OCI-LY7 (cell line): ENCODE measurements at regions of chr7 and their contacts with region 1.

Region 1: DNA sequence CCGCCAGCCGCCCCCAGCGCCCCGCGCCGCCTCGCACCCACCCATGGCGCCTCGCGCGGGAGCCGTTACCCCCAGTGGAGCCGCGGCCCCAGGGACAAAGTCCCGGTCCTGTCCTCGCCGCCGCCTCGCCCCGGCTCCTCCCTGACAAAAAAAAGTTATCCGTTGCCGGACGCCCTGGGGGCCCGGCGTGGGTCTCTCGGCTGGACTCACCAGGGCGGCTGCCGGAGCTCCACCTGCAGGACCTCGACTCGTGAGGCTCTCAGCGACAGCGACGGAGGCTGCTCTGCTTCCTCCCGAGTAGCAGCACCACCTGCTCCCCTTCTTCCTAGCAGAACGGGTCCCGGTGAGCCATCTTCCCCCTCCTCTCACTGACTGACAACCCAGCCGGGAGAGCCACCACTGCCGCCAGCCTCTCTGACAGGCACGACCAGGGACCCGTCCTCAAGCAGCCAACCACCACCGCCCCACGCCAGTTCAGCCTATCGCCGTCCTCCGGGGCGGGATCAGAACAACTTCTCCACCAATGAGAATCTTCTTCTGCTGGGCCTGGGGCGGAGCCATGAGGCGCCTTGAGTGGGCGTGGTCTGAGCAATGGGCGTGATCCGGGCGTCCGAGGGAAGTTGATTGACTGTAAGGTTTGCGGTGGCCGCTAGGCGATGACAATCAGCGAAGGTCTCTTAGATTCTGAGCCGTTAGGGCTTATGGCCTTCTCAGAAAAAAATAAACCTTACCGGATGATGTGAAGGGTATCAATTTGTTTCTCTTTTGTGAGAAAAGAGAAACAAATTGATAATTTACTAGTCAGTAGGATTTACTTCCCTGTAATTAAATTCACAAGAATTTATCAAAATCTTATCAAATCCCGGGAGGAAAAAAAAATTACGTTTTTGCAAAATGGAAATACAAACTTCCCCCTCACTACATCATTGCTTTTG is at the start of gene HYCC1:
- DNase-seq: peak; percentile 99
- H3K4me3 ChIP-seq: peak within 1 kb of the TSS; percentile 98
- H3K27ac ChIP-seq: peak within 1 kb of the TSS; percentile 84
- H3K4me1 ChIP-seq: peaks cover 75% of the 10 kb centered on the region
- CTCF ChIP-seq: peak; percentile 79
- total RNA-seq, gene HYCC1: 43.3 and 69.9 TPM in 2 replicates

Region 2: DNA sequence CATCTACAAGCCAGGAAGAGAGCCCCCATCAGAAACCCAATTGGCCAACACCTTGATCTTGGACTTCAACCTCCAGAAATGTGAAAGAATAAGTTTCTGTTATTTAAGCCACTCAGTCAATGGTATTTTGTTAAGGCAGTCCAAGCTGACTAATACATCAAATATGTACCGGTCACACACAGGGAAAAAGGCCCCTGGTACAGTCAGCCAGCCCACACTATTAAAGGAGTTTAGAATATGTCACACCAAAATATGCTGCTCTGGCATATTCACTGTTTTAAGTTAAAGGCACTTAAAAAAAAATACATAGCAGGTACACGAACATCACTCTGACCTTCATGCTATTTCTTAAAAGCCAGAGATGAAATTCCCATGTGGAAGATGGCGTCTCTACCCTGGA is 1053.1 kb before region 1 on chr7:
- CTCF ChIA-PET with region 1: no interaction called
- POLR2A ChIA-PET with region 1: no interaction called
- intact Hi-C with region 1: loop called (anchors 5 kb)
- DNase-seq: no peak
- H3K4me3 ChIP-seq: no peak overlapping the region
- H3K27ac ChIP-seq: no peak overlapping the region
- H3K4me1 ChIP-seq: peaks cover 43% of the 10 kb centered on the region
- CTCF ChIP-seq: no peak

Region 3: DNA sequence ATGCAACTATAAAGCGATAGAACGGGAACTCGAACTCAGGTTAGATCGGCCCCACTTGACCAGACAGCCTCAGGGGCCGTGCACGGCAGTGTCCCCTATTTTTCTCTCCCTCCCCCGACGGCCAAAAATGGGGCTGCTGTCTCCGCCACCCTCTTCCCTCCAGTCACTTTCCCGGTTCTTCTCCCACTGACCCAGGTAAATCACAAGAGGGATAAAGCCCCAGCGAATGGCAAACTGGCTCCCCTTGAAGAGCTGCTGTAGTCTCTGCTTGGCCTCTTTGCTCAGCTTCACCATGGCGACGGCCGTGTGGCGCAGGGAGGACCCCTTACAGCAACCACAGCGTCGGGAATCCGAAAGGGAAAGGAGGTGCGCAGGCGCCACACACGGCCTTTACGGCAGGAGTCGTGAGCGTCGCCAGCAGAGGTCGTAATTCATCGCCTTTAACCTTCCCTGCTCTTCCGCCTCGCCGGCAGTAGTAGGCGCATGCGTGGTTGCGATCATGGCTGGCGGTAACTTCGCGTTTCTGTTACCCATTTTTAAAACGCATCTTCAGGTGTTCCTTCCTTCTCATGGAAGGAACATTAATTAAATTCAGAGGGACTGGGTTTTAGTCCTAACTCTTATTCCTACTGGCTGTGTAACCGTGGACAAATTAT is 191.4 kb before region 1 on chr7 and contains the start of gene TOMM7:
- CTCF ChIA-PET with region 1: interaction called, 3 read pairs
- POLR2A ChIA-PET with region 1: interaction called, 5 read pairs
- intact Hi-C with region 1: loop called (anchors 2 kb)
- DNase-seq: peak; percentile 98
- H3K4me3 ChIP-seq: peak within 1 kb of the TSS; percentile 77
- H3K27ac ChIP-seq: peak within 1 kb of the TSS; percentile 39
- H3K4me1 ChIP-seq: peaks cover 29% of the 10 kb centered on the region
- CTCF ChIP-seq: peak; percentile 51
- total RNA-seq, gene TOMM7: 184 and 195 TPM in 2 replicates

Region 4: GRCh38 chr7:22854158-22855048 is 159.6 kb before region 1 on chr7:
- CTCF ChIA-PET with region 1: no interaction called
- POLR2A ChIA-PET with region 1: interaction called, 5 read pairs
- intact Hi-C with region 1: loop called (anchors 1 kb)
- DNase-seq: peak; percentile 89
- H3K4me3 ChIP-seq: peak overlapping the region; percentile 81
- H3K27ac ChIP-seq: peak overlapping the region; percentile 62
- H3K4me1 ChIP-seq: peaks cover 42% of the 10 kb centered on the region
- CTCF ChIP-seq: peak; percentile 58; the same call in 1 of the 2 replicates

Region 5: DNA sequence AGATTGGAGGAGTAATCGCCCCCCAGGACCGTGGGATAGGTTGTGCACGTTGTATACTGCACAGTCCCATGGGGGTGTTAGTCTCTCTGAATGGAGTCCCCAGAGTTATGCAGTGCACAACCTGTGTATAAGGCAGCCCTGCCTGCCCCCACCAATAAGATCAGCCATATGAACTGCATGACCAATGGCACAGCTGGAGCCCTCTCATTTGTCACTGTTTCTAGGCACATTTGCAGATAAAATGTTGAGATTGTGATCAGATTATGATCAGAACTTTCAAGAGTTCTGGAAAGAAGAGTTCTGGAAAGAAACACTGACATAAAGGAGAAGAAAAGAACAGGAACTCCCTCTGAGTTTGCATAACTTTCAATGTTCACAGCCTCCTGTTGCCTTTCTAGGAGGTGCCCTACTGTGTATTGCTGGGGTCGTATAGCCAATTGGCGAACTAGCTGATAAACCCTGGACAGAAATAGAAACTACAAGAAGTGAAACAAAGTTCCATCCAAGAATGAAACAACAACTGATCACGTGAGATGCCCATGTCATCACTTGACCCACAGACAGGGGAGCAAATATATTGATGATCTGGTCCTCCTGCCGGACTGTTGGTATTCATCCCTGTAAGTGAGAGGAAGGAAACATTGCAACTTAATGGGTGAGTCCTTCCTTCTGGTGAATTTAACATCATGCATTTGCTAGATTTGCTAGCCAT is 141.7 kb before region 1 on chr7:
- CTCF ChIA-PET with region 1: no interaction called
- POLR2A ChIA-PET with region 1: no interaction called
- intact Hi-C with region 1: no loop called
- DNase-seq: no peak
- H3K4me3 ChIP-seq: no peak overlapping the region
- H3K27ac ChIP-seq: no peak overlapping the region
- H3K4me1 ChIP-seq: peaks cover 14% of the 10 kb centered on the region
- CTCF ChIP-seq: no peak

Region 6: GRCh38 chr7:22958742-22959141 is 55.2 kb before region 1 on chr7:
- CTCF ChIA-PET with region 1: no interaction called
- POLR2A ChIA-PET with region 1: interaction called, 4 read pairs
- intact Hi-C with region 1: loop called (anchors 5 kb)
- DNase-seq: no peak
- H3K4me3 ChIP-seq: no peak overlapping the region
- H3K27ac ChIP-seq: no peak overlapping the region
- H3K4me1 ChIP-seq: no peaks in the 10 kb centered on the region
- CTCF ChIP-seq: no peak

Region 7: DNA sequence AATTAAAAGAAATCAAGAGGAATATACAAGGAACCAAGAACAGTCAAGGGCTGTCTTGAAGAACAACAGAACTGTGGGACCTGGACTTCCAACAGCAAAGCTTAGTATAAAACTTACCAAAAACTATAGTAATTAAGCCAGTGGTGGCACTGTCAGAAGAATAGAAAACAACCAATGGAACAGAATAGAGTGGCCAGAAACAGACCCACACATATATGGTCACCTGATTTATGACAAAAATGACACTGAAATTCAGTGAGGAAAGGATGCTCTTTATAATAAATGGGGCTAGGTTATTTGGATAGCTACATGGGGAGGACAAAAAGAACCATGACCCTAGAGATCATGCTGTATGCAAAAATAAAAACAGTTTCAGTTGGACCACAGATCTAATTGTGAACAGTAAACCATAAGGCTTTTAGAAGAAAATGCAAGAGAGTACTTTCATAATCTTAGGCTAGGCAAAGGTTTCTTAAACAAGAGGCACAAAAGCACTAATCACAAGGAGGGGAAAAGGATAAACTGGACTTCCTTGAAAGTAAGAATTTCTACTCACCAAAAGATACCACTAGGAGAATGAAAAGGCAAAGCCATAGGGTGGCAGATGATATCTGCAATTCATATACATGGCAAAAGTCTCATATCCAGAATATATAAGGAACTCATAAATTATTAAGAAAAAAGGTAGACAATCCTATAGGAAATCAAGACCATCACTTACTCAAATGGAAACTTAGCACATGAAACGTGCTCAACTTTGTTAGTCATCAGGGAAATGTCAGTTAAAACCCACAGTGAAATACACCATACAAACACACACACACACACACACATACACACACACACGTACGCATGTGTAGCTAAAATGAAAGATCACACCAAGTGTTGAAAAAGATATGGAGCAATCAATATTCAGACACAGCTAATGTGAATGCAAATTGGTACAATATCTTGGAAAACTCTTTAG is 20.8 kb before region 1 on chr7:
- CTCF ChIA-PET with region 1: interaction called, 3 read pairs
- POLR2A ChIA-PET with region 1: interaction called, 31 read pairs
- intact Hi-C with region 1: loop called (anchors 1 kb)
- DNase-seq: peak; percentile 54
- H3K4me3 ChIP-seq: peak overlapping the region; percentile 40
- H3K27ac ChIP-seq: peak overlapping the region; percentile 94
- H3K4me1 ChIP-seq: peaks cover 80% of the 10 kb centered on the region
- CTCF ChIP-seq: no peak

Region 8: GRCh38 chr7:23026164-23026563 is 12.2 kb after region 1 on chr7:
- CTCF ChIA-PET with region 1: no interaction called
- POLR2A ChIA-PET with region 1: interaction called, 11 read pairs
- intact Hi-C with region 1: no loop called
- DNase-seq: no peak
- H3K4me3 ChIP-seq: no peak overlapping the region
- H3K27ac ChIP-seq: no peak overlapping the region
- H3K4me1 ChIP-seq: peaks cover 13% of the 10 kb centered on the region
- CTCF ChIP-seq: no peak

Region 9: DNA sequence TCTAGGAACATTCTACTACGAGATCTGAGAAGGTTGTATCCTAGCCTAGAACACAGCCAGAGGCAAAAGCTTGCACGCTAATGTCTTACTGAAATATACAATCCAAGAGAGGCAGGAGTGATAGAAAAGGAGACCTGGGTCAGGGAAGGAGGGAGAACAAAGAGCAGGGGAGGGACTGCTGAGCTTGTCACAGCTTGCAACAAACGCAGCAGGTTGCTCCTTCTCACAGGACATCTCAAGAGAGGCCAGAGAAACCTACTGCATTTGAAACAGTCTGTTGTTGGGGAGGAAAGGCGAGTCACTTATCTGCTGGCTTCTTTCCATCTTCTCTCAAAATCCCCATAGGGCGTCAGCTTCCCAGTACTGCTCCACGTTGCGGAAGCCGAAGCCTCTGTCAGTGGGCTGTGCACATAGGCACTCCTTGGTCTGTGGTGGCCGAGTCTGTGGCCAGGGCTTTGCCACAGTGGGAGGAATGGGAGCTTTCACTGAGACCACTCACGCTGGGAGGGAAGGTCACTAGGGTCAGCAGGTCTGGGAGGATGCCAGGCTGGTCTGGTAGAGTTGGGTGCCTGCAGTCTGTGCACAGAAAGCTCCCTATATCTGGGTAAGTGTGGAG is 206.8 kb after region 1 on chr7:
- CTCF ChIA-PET with region 1: no interaction called
- POLR2A ChIA-PET with region 1: no interaction called
- intact Hi-C with region 1: no loop called
- DNase-seq: no peak
- H3K4me3 ChIP-seq: no peak overlapping the region
- H3K27ac ChIP-seq: no peak overlapping the region
- H3K4me1 ChIP-seq: no peaks in the 10 kb centered on the region
- CTCF ChIP-seq: no peak